ENCODE measurements at regions of chr2 and their contacts with region 1.

Region 1: GRCh38 chr2:217802876-217803652 is 199.7 kb downstream of the TNS1 start:
- DNase-seq: no peak
- H3K4me3 ChIP-seq: no peak overlapping the region
- H3K27ac ChIP-seq: no peak overlapping the region
- H3K4me1 ChIP-seq: no peaks in the 10 kb centered on the region
- H3K27me3 ChIP-seq: no peaks in the 10 kb centered on the region
- CTCF ChIP-seq: no peak
- POLR2A ChIP-seq: no peak

Region 2: DNA sequence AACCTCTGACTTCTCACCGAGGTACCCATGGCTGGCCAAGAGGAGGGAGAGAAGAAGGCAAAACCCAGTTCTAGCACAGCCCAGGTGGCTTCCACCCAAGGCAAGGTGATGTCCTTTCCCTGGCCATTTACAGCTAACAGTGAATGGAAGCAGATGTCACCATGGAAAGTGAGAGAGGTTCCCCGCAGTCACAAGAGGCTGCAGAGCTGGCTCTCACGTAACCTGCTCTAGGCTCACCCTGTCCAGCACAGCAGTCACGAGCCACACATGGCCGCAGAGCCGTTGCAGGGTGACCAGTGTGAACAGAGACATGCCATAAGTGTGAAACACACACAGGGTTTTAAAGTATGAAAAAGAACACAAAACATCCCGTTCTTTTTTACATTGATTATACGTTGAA is 30.4 kb after region 1 on chr2:
- intact Hi-C with region 1: loop called (anchors 1 kb)
- DNase-seq: no peak
- H3K4me3 ChIP-seq: no peak overlapping the region
- H3K27ac ChIP-seq: peak overlapping the region; percentile 17 to 50
- H3K4me1 ChIP-seq: peaks cover 0 to 14% of the 10 kb centered on the region in 2 donors
- H3K27me3 ChIP-seq: no peaks in the 10 kb centered on the region
- CTCF ChIP-seq: no peak
- POLR2A ChIP-seq: no peak

Region 3: GRCh38 chr2:217851191-217852020 is 48.3 kb after region 1 on chr2:
- intact Hi-C with region 1: no loop called
- DNase-seq: no peak
- H3K4me3 ChIP-seq: no peak overlapping the region
- H3K27ac ChIP-seq: peak overlapping the region in 1 of 2 donors; percentile 80
- H3K4me1 ChIP-seq: peaks cover 8 to 12% of the 10 kb centered on the region in 2 donors
- H3K27me3 ChIP-seq: no peaks in the 10 kb centered on the region
- CTCF ChIP-seq: no peak
- POLR2A ChIP-seq: no peak